ENCODE measurements at regions of chr4 and their contacts with region 1.

Region 1: GRCh38 chr4:79823148-79823763 is 249.8 kb downstream of the ANTXR2 start:
- DNase-seq: peak; percentile 71
- H3K4me3 ChIP-seq: no peak overlapping the region
- H3K27ac ChIP-seq: peak overlapping the region; percentile 44 to 72
- H3K4me1 ChIP-seq: no peaks in the 10 kb centered on the region
- H3K27me3 ChIP-seq: no peaks in the 10 kb centered on the region
- CTCF ChIP-seq: no peak
- POLR2A ChIP-seq: no peak

Region 2: GRCh38 chr4:79281566-79282359 is 541.5 kb before region 1 on chr4:
- intact Hi-C with region 1: loop called (anchors 10 kb)
- DNase-seq: peak; percentile 9
- H3K4me3 ChIP-seq: no peak overlapping the region
- H3K27ac ChIP-seq: peak overlapping the region; percentile 22 to 46
- H3K4me1 ChIP-seq: no peaks in the 10 kb centered on the region
- H3K27me3 ChIP-seq: no peaks in the 10 kb centered on the region
- CTCF ChIP-seq: no peak
- POLR2A ChIP-seq: no peak

Region 3: GRCh38 chr4:79597266-79597665 is 226.0 kb before region 1 on chr4:
- intact Hi-C with region 1: loop called (anchors 10 kb)
- DNase-seq: no peak
- H3K4me3 ChIP-seq: no peak overlapping the region
- H3K27ac ChIP-seq: peak overlapping the region; percentile 77 to 87
- H3K4me1 ChIP-seq: peaks cover 16% of the 10 kb centered on the region
- H3K27me3 ChIP-seq: no peaks in the 10 kb centered on the region
- CTCF ChIP-seq: no peak
- POLR2A ChIP-seq: no peak

Region 4: DNA sequence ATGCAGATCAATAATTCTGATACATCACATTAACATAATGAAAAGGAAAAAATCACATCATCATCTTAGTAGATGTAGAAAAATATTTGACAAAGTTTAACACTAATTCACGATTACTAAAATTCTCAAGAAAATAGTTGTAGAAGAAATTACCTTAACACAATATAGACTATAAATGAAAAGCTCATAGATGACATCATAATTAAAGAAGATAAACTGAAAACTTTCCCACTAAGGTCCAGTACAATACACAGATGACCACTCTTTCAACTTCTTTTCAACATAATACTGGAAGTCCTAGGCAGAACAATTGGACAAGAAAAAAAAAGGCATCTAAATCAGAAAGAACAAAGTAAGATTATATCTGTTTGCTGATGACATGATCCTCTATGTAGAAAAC is 52.4 kb before region 1 on chr4:
- intact Hi-C with region 1: no loop called
- DNase-seq: no peak
- H3K4me3 ChIP-seq: no peak overlapping the region
- H3K27ac ChIP-seq: no peak overlapping the region
- H3K4me1 ChIP-seq: no peaks in the 10 kb centered on the region
- H3K27me3 ChIP-seq: no peaks in the 10 kb centered on the region
- CTCF ChIP-seq: no peak
- POLR2A ChIP-seq: no peak

Region 5: DNA sequence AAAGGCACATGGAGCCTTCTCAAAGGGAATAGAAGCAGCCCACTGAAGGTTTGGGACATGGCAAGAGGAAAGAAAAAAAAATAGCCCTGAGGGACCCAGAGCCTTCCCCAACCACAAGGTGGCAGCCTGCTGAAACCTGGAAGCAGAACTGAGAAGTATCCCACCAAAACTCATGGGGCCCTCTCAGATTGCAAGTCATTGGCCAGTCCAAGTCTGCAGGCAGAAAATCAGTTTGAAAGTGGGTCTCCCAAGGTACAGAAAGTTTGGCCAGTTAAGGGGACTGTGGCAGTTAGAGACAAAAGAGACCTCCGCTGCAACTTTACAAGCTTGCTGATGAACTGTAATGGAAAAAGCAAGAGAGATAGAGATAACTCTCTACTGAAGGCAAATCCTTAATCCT is 94.0 kb after region 1 on chr4:
- intact Hi-C with region 1: loop called (anchors 10 kb)
- DNase-seq: no peak
- H3K4me3 ChIP-seq: no peak overlapping the region
- H3K27ac ChIP-seq: peak overlapping the region in 1 of 2 donors; percentile 10
- H3K4me1 ChIP-seq: no peaks in the 10 kb centered on the region
- H3K27me3 ChIP-seq: no peaks in the 10 kb centered on the region
- CTCF ChIP-seq: peak in 1 of 4 experiments; percentile 21
- POLR2A ChIP-seq: no peak

Region 6: GRCh38 chr4:80202190-80202711 is 379.0 kb after region 1 on chr4:
- intact Hi-C with region 1: loop called (anchors 10 kb)
- DNase-seq: peak; percentile 77
- H3K4me3 ChIP-seq: peak overlapping the region; percentile 56 to 67
- H3K27ac ChIP-seq: peak overlapping the region; percentile 86 to 89
- H3K4me1 ChIP-seq: no peaks in the 10 kb centered on the region
- H3K27me3 ChIP-seq: no peaks in the 10 kb centered on the region
- CTCF ChIP-seq: peak; percentile 69 to 85 (median 75)
- POLR2A ChIP-seq: no peak

Measured in prostate gland (tissue), 2 donors.